ENCODE measurements at regions of chr15 and their contacts with region 1.

Region 1: GRCh38 chr15:41230650-41231533 is at the starts of genes CHP1 and EXD1:
- DNase-seq: peak; percentile 80 to 97 (median 91)
- ATAC-seq: peak; percentile 92 to 96
- H3K4me3 Mint-ChIP-seq: peak within 1 kb of the TSS; percentile 88 to 94 (median 92)
- H3K27ac Mint-ChIP-seq: peak within 1 kb of the TSS; percentile 77 to 95 (median 93)
- H3K4me1 Mint-ChIP-seq: peaks cover 15 to 37% (median 29%) of the 10 kb centered on the region in 4 donors
- H3K27me3 Mint-ChIP-seq: peaks cover 0 to 2% (median 0%) of the 10 kb centered on the region in 5 donors
- polyA plus RNA-seq, gene CHP1: 11.3 to 21.7 (median 12.5) TPM
- polyA plus RNA-seq, gene EXD1: not detected

Region 2: DNA sequence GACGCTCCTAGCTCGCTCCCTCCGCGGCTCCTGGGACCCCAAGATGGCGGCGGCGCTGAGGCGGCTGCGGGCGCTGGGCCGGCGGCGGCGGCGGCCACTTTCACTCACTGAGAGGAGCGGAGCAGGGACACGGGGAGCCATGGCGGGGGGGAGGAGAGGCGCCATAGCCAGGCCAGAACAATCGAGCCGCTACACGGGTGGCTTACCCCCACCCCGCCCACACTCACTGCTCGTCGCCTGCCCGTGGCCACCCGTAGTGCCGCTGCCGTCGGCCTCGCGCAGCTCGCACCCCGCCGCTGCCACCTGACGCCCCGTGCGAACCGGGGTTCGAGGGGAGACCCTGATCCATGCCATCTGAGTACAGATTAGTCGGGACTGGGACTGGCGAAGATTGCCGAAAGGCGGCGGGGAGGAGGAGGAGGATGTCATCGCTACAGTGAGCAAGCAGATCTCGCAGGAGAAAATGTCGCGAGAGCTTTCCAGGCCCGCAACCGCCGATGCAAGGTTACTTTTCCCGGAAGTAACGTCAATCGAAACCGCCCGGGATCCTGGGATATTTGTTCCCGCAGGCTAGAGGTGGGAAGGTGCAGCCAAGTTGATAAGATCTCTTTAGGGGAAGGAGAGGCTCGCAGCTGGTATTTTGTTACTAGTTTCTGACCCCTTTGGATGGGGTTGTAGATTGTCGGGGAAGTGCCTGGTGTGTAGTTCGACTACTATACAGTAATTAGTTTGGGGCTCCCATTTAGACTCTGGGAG is 114.6 kb before region 1 on chr15 and contains the start of gene INO80:
- POLR2A ChIA-PET with region 1: interaction called, 10 read pairs
- DNase-seq: peak; percentile 89 to 100 (median 95)
- ATAC-seq: peak; percentile 79 to 81
- H3K4me3 Mint-ChIP-seq: peak within 1 kb of the TSS; percentile 91 to 99 (median 96)
- H3K27ac Mint-ChIP-seq: peak within 1 kb of the TSS; percentile 97 to 100 (median 100)
- H3K4me1 Mint-ChIP-seq: peaks cover 6 to 39% (median 35%) of the 10 kb centered on the region in 4 donors
- H3K27me3 Mint-ChIP-seq: no peaks in the 10 kb centered on the region
- polyA plus RNA-seq, gene INO80: 2.2 to 8.0 (median 4.5) TPM

Region 3: GRCh38 chr15:41331833-41332787 is 101.2 kb after region 1 on chr15 and contains the start of gene OIP5:
- POLR2A ChIA-PET with region 1: interaction called, 11 read pairs
- DNase-seq: peak; percentile 90 to 99 (median 98)
- ATAC-seq: peak; percentile 95 to 96
- H3K4me3 Mint-ChIP-seq: peak within 1 kb of the TSS; percentile 96 to 100 (median 99)
- H3K27ac Mint-ChIP-seq: peak within 1 kb of the TSS; percentile 82 to 98 (median 94)
- H3K4me1 Mint-ChIP-seq: peaks cover 6 to 31% (median 27%) of the 10 kb centered on the region in 4 donors
- H3K27me3 Mint-ChIP-seq: no peaks in the 10 kb centered on the region
- polyA plus RNA-seq, gene OIP5: 0.18 to 0.24 TPM in 2 of 3 donors, not detected in the other

Measured in naive thymus-derived CD8-positive, alpha-beta T cell (primary cell).